ENCODE measurements at regions of chr11 and their contacts with region 1.

Region 1: GRCh38 chr11:92050305-92050704 is 174.3 kb upstream of the FAT3 start:
- DNase-seq: no peak
- H3K4me3 Mint-ChIP-seq: no peak overlapping the region
- H3K27ac Mint-ChIP-seq: no peak overlapping the region
- H3K4me1 Mint-ChIP-seq: peaks cover 27% of the 10 kb centered on the region
- H3K27me3 Mint-ChIP-seq: no peaks in the 10 kb centered on the region
- CTCF ChIP-seq: no peak

Region 2: DNA sequence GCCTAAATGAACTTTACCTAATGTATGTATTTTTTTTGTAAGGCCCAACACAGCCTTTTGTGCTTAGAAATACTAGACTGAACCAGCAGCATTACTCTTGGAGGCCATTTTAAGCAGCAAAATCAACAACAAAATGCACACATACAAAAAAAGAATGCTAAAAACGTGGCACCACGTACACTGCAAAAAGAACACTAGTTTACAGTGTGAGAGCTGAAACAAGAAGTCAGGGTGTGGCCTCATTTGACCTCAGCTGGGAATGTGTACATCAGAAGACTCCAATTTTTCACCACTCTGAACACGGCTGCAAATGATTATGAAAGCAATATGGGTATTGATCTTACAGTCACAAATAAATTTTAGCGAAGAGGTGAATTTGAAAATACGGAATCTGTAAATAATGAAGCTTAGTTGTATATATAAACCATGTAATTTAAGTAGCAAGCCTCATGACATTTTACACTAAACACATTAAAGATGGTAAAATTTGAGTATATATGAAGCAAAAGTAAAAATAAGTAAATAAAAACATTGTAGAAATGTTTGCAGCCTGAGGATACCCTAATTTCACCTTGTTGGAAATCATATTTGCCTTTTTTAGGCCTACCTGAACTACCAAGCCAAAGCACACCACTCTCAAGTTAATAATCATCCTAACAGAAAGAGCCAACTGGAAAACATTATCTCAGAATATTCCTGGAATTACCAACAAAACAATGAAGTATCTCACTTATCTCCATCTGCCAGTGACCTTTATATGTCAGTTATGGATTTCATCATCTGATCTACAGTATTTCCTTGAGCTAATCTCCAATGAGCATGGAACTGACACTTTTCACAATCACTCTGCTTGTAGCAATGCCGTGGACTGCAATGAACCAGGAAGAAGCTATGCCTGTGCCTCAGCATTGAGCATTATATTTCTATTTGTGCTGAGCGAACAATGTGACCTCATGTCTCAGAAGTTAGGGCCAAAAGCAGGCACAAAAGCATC is 145.2 kb before region 1 on chr11:
- CTCF ChIA-PET with region 1: no interaction called
- intact Hi-C with region 1: loop called (anchors 10 kb)
- DNase-seq: no peak
- H3K4me3 Mint-ChIP-seq: no peak overlapping the region
- H3K27ac Mint-ChIP-seq: no peak overlapping the region
- H3K4me1 Mint-ChIP-seq: no peaks in the 10 kb centered on the region
- H3K27me3 Mint-ChIP-seq: no peaks in the 10 kb centered on the region
- CTCF ChIP-seq: no peak

Measured in Calu3 (cell line).